ENCODE measurements at regions of chr10 and their contacts with region 1.

Region 1: GRCh38 chr10:111565542-111565941 is 488.7 kb downstream of the ADRA2A start:
- DNase-seq: no peak
- H3K4me3 ChIP-seq: no peak overlapping the region
- H3K27ac ChIP-seq: no peak overlapping the region
- H3K4me1 ChIP-seq: no peaks in the 10 kb centered on the region
- H3K27me3 ChIP-seq: no peaks in the 10 kb centered on the region
- CTCF ChIP-seq: no peak

Region 2: DNA sequence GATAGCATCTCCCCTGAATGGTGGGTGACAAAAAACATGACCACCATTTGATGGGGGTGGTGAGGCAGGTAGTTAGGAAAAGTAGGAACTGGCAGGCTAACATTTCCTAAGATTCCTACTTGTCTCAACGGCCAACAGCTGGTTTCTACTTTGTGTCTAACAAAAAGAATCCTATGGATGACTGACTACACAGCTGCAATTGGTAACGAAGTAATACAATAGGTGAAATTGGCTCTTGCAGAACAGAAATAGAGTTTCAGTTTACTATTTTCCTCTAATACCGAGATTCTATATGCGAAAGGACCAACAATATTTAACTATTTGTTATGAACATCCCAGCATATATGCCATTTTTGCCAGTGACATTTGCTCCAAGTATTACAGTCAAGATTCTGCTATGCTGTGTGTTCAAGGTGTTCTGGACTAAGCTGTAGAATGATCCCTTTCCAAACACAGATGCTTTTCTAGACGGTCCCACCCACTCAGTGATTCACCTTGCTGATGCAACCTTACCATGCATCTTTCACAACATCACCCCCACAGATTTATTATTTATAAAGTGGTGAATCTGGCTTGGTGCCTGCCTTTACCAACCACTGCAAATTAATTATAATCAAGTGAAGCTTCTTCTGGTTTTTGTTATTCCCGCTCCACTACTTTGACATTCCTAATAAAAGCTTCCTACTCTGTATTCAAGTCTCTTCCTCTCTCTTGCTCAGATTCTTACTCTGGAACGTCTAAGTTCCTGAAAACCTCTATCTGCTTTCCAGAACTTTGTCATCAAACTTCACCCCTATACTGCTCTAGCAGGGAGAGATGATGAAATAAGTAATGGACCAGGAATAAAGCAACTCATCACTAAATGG is 663.4 kb before region 1 on chr10:
- CTCF ChIA-PET with region 1: no interaction called
- POLR2A ChIA-PET with region 1: interaction called, 14 read pairs
- intact Hi-C with region 1: no loop called
- DNase-seq: peak; percentile 10 to 57
- H3K4me3 ChIP-seq: no peak overlapping the region
- H3K27ac ChIP-seq: peak overlapping the region; percentile 84
- H3K4me1 ChIP-seq: peaks cover 21% of the 10 kb centered on the region
- H3K27me3 ChIP-seq: no peaks in the 10 kb centered on the region
- CTCF ChIP-seq: no peak

Region 3: GRCh38 chr10:111801841-111802240 is 236.3 kb after region 1 on chr10:
- CTCF ChIA-PET with region 1: no interaction called
- POLR2A ChIA-PET with region 1: no interaction called
- intact Hi-C with region 1: no loop called
- DNase-seq: no peak
- H3K4me3 ChIP-seq: no peak overlapping the region
- H3K27ac ChIP-seq: no peak overlapping the region
- H3K4me1 ChIP-seq: no peaks in the 10 kb centered on the region
- H3K27me3 ChIP-seq: no peaks in the 10 kb centered on the region
- CTCF ChIP-seq: no peak